ENCODE measurements at regions of chr13 and their contacts with region 1.

Region 1: GRCh38 chr13:99269627-99270241 is 11.6 kb upstream of the GPR18 start:
- DNase-seq: peak; percentile 81
- ATAC-seq: peak; percentile 76
- H3K4me3 ChIP-seq: no peak overlapping the region
- H3K4me3 Mint-ChIP-seq: no peak overlapping the region
- H3K27ac ChIP-seq: peak overlapping the region; percentile 69 to 89
- H3K27ac Mint-ChIP-seq: peak overlapping the region; percentile 50
- H3K4me1 ChIP-seq: peaks cover 45 to 55% of the 10 kb centered on the region in 2 donors
- H3K4me1 Mint-ChIP-seq: peaks cover 59% of the 10 kb centered on the region
- H3K27me3 ChIP-seq: no peaks in the 10 kb centered on the region
- H3K27me3 Mint-ChIP-seq: no peaks in the 10 kb centered on the region
- CTCF ChIP-seq: peak; percentile 92

Region 2: GRCh38 chr13:98842864-98843481 is 426.8 kb before region 1 on chr13:
- CTCF ChIA-PET with region 1: interaction called, 14 read pairs
- POLR2A ChIA-PET with region 1: no interaction called
- intact Hi-C with region 1: no loop called
- DNase-seq: peak; percentile 68
- ATAC-seq: peak; percentile 79
- H3K4me3 ChIP-seq: no peak overlapping the region
- H3K4me3 Mint-ChIP-seq: no peak overlapping the region
- H3K27ac ChIP-seq: no peak overlapping the region
- H3K27ac Mint-ChIP-seq: no peak overlapping the region
- H3K4me1 ChIP-seq: no peaks in the 10 kb centered on the region
- H3K4me1 Mint-ChIP-seq: peaks cover 2% of the 10 kb centered on the region
- H3K27me3 ChIP-seq: no peaks in the 10 kb centered on the region
- H3K27me3 Mint-ChIP-seq: no peaks in the 10 kb centered on the region
- CTCF ChIP-seq: peak; percentile 86

Region 3: DNA sequence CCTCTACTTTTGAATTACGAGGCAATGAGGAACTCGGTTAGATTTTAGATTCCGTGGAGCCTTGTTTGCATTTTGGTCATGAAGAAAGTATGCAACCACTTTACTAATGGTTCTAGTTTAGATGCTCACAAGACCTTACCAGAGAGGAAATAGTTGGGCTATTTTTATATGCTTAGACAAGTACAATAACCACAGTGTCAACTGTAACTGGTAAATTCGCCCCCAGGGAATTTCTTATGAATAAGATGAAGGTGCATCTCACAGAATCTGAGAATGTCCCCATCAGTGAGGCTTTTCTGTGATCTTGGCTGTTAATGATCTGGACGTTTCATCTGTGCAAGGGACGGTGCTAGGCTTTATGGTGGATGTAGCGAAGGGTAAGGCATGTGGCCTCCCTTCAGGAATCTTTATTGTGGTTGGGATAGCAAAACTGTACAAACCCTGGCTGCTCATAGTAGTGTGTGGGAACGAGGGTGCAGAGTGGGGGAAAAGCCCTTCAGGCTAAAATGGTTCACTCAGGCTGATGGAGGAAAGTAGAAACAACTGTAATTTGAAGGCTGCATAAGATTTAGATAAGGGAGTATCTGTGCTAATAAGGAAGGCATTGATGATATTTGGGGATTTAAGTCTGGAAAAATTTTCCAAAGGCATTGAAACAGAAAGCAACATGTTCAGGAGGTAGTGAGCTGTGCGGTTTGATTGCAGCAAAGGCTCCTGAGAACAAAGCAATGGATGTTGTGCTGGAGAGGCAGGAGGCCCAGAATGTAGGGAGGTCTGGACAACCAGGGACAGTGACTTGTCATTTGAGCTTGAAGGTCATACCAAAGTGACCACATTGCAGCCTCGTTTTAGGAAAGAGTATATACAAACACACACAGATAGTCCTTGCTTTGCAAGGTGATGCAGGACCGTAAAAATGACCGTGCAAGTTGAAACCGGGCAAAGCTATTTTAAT is 40.7 kb before region 1 on chr13:
- CTCF ChIA-PET with region 1: interaction called, 43 read pairs
- POLR2A ChIA-PET with region 1: interaction called, 3 read pairs
- intact Hi-C with region 1: no loop called
- DNase-seq: peak; percentile 87
- ATAC-seq: peak; percentile 79
- H3K4me3 ChIP-seq: peak overlapping the region; percentile 16 to 56 (median 49)
- H3K4me3 Mint-ChIP-seq: peak overlapping the region; percentile 86
- H3K27ac ChIP-seq: peak overlapping the region; percentile 65 to 74
- H3K27ac Mint-ChIP-seq: peak overlapping the region; percentile 80
- H3K4me1 ChIP-seq: peaks cover 84 to 86% of the 10 kb centered on the region in 2 donors
- H3K4me1 Mint-ChIP-seq: peaks cover 77% of the 10 kb centered on the region
- H3K27me3 ChIP-seq: no peaks in the 10 kb centered on the region
- H3K27me3 Mint-ChIP-seq: no peaks in the 10 kb centered on the region
- CTCF ChIP-seq: no peak

Region 4: GRCh38 chr13:99288089-99288488 is 18.4 kb after region 1 on chr13:
- CTCF ChIA-PET with region 1: interaction called, 164 read pairs
- POLR2A ChIA-PET with region 1: interaction called, 3 read pairs
- intact Hi-C with region 1: no loop called
- DNase-seq: peak; percentile 55
- ATAC-seq: peak; percentile 73
- H3K4me3 ChIP-seq: peak overlapping the region in 1 of 5 experiments; percentile 2
- H3K4me3 Mint-ChIP-seq: peak overlapping the region; percentile 38
- H3K27ac ChIP-seq: peak overlapping the region; percentile 11 to 58
- H3K27ac Mint-ChIP-seq: peak overlapping the region; percentile 75
- H3K4me1 ChIP-seq: peaks cover 68 to 76% of the 10 kb centered on the region in 2 donors
- H3K4me1 Mint-ChIP-seq: peaks cover 83% of the 10 kb centered on the region
- H3K27me3 ChIP-seq: no peaks in the 10 kb centered on the region
- H3K27me3 Mint-ChIP-seq: no peaks in the 10 kb centered on the region
- CTCF ChIP-seq: no peak

Region 5: GRCh38 chr13:99347911-99348451 is 78.2 kb after region 1 on chr13:
- CTCF ChIA-PET with region 1: interaction called, 20 read pairs
- POLR2A ChIA-PET with region 1: interaction called, 3 read pairs
- intact Hi-C with region 1: no loop called
- DNase-seq: peak; percentile 48
- ATAC-seq: peak; percentile 69
- H3K4me3 ChIP-seq: no peak overlapping the region
- H3K4me3 Mint-ChIP-seq: peak overlapping the region; percentile 57
- H3K27ac ChIP-seq: peak overlapping the region; percentile 13 to 17
- H3K27ac Mint-ChIP-seq: peak overlapping the region; percentile 92
- H3K4me1 ChIP-seq: peaks cover 19 to 43% of the 10 kb centered on the region in 2 donors
- H3K4me1 Mint-ChIP-seq: peaks cover 64% of the 10 kb centered on the region
- H3K27me3 ChIP-seq: no peaks in the 10 kb centered on the region
- H3K27me3 Mint-ChIP-seq: no peaks in the 10 kb centered on the region
- CTCF ChIP-seq: no peak

Region 6: GRCh38 chr13:99393791-99394735 is 124.3 kb after region 1 on chr13:
- CTCF ChIA-PET with region 1: interaction called, 477 read pairs
- POLR2A ChIA-PET with region 1: interaction called, 4 read pairs
- intact Hi-C with region 1: no loop called
- DNase-seq: no peak
- ATAC-seq: no peak
- H3K4me3 ChIP-seq: no peak overlapping the region
- H3K4me3 Mint-ChIP-seq: no peak overlapping the region
- H3K27ac ChIP-seq: no peak overlapping the region
- H3K27ac Mint-ChIP-seq: no peak overlapping the region
- H3K4me1 ChIP-seq: no peaks in the 10 kb centered on the region
- H3K4me1 Mint-ChIP-seq: no peaks in the 10 kb centered on the region
- H3K27me3 ChIP-seq: no peaks in the 10 kb centered on the region
- H3K27me3 Mint-ChIP-seq: no peaks in the 10 kb centered on the region
- CTCF ChIP-seq: no peak

Region 7: DNA sequence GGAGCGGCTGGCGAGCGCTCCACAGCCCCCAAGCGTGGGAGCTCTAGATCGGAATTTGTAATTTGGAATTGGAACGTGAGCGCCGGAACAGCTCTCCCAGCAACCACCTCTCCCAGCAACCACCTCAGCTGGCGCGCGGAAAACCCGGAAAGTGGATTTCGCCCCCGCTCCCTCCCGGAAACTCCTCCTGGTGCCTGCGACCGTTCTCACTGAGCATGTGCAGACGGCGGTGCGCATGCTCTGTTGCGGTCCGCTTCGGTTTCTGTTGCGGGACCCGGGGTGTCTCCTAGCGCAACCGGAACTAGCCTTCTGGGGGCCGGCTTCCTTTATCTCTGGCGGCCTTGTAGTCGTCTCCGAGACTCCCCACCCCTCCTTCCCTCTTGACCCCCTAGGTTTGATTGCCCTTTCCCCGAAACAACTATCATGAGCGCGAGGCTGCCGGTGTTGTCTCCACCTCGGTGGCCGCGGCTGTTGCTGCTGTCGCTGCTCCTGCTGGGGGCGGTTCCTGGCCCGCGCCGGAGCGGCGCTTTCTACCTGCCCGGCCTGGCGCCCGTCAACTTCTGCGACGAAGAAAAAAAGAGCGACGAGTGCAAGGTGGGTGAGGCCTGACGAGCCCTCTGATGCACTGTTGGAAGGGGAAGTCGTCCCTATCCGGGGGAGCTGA is 231.6 kb after region 1 on chr13 and contains the start of gene TM9SF2:
- CTCF ChIA-PET with region 1: interaction called, 57 read pairs
- POLR2A ChIA-PET with region 1: no interaction called
- intact Hi-C with region 1: no loop called
- DNase-seq: peak; percentile 98
- ATAC-seq: peak; percentile 60
- H3K4me3 ChIP-seq: peak within 1 kb of the TSS; percentile 75 to 89 (median 87)
- H3K4me3 Mint-ChIP-seq: peak within 1 kb of the TSS; percentile 92
- H3K27ac ChIP-seq: peak within 1 kb of the TSS; percentile 89 to 90
- H3K27ac Mint-ChIP-seq: peak within 1 kb of the TSS; percentile 98
- H3K4me1 ChIP-seq: peaks cover 63 to 65% of the 10 kb centered on the region in 2 donors
- H3K4me1 Mint-ChIP-seq: peaks cover 77% of the 10 kb centered on the region
- H3K27me3 ChIP-seq: no peaks in the 10 kb centered on the region
- H3K27me3 Mint-ChIP-seq: no peaks in the 10 kb centered on the region
- CTCF ChIP-seq: no peak
- total RNA-seq, gene TM9SF2: 63.3 and 63.6 TPM in 2 replicates